ENCODE measurements at regions of chr6 and their contacts with region 1.

Region 1: DNA sequence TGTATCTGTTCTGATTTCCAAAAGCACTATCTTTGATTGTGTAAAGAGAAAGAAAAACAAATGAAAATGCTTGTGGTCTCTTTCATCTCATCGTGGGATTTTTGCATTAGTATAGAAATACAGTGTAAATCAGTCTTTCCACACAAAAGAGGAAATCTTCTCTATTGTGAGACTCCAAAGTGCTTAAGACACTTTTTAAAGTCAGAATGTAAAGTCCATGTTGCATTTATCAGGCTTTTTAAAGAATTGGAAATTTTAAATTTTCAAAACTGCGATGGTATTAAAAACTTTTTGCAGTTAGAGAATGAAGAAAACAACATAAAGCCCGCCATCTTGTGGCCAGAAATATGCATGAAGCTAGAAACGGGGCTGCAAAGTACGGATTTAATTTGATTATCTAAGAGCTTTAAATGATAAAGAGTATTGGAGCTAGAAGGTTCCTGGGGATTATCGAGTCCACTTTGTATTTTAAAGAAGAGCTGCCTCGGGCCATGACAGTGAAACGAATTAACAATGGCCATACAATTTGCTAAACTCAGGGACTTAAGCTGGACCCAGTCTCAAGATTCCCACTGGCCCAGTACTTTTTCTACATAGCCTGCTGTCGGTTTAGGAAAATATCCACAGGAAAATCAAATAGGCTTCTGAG is 339.6 kb downstream of the ARHGAP18 start:
- DNase-seq: peak; percentile 62
- ATAC-seq: peak; percentile 33
- H3K4me3 Mint-ChIP-seq: no peak overlapping the region
- H3K27ac Mint-ChIP-seq: peak overlapping the region; percentile 14
- H3K4me1 Mint-ChIP-seq: peaks cover 19% of the 10 kb centered on the region
- H3K27me3 Mint-ChIP-seq: no peaks in the 10 kb centered on the region

Region 2: GRCh38 chr6:127554435-127555006 is 1815.9 kb before region 1 on chr6:
- CTCF ChIA-PET with region 1: no interaction called
- POLR2A ChIA-PET with region 1: no interaction called
- intact Hi-C with region 1: loop called in 1 of 2 experiments (anchors 5 kb)
- DNase-seq: peak; percentile 36
- ATAC-seq: peak; percentile 42
- H3K4me3 Mint-ChIP-seq: no peak overlapping the region
- H3K27ac Mint-ChIP-seq: no peak overlapping the region
- H3K4me1 Mint-ChIP-seq: no peaks in the 10 kb centered on the region
- H3K27me3 Mint-ChIP-seq: peaks cover 26% of the 10 kb centered on the region

Region 3: DNA sequence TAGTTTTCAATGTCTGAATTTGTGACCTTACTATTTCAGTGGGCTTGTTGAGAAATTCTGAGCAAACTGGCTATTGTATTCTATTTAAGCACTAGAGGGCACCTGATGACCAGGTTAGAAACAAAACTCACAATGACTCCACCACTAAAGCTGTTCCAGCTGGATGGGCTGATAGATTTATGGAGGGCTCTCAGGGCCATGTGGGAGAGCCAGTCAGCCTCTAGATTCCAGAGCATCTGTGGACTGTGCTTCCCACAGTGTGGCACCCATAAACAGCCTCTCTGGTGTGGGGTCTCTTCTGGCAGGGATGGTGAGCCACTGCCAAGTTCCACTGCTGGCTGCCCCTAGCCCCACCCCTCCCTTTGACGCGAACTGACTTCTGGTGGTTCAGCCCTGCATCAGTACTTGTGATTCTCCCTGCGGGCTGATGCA is 1764.2 kb before region 1 on chr6:
- CTCF ChIA-PET with region 1: no interaction called
- POLR2A ChIA-PET with region 1: no interaction called
- intact Hi-C with region 1: loop called in 1 of 2 experiments (anchors 5 kb)
- DNase-seq: no peak
- ATAC-seq: peak; percentile 44
- H3K4me3 Mint-ChIP-seq: no peak overlapping the region
- H3K27ac Mint-ChIP-seq: no peak overlapping the region
- H3K4me1 Mint-ChIP-seq: no peaks in the 10 kb centered on the region
- H3K27me3 Mint-ChIP-seq: no peaks in the 10 kb centered on the region

Region 4: GRCh38 chr6:128725271-128726233 is 644.8 kb before region 1 on chr6:
- CTCF ChIA-PET with region 1: no interaction called
- POLR2A ChIA-PET with region 1: no interaction called
- intact Hi-C with region 1: loop called in 1 of 2 experiments (anchors 5 kb)
- DNase-seq: peak; percentile 40
- ATAC-seq: no peak
- H3K4me3 Mint-ChIP-seq: no peak overlapping the region
- H3K27ac Mint-ChIP-seq: no peak overlapping the region
- H3K4me1 Mint-ChIP-seq: no peaks in the 10 kb centered on the region
- H3K27me3 Mint-ChIP-seq: peaks cover 30% of the 10 kb centered on the region

Region 5: DNA sequence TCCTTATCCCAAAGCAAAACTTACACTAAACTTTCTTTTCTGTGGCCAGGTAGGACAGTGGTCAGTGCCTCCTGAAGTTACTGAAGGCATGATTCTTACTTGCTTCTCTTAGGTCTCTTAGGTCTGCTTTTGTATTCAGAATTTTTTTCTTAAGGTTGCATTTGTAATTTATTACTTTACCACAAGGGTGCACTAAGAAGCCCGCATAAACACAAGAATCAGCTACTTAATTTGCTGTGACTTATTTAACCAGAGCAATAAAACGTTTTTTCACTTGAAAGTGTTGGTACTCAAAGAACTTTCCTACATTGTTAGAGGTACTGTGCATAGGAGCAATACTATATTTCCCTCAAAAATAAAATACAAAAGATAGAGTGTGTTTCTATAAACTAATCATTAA is 562.8 kb before region 1 on chr6:
- CTCF ChIA-PET with region 1: interaction called, 4 read pairs
- POLR2A ChIA-PET with region 1: no interaction called
- intact Hi-C with region 1: loop called in 1 of 2 experiments (anchors 5 kb)
- DNase-seq: no peak
- ATAC-seq: no peak
- H3K4me3 Mint-ChIP-seq: no peak overlapping the region
- H3K27ac Mint-ChIP-seq: no peak overlapping the region
- H3K4me1 Mint-ChIP-seq: no peaks in the 10 kb centered on the region
- H3K27me3 Mint-ChIP-seq: peaks cover 8% of the 10 kb centered on the region

Region 6: DNA sequence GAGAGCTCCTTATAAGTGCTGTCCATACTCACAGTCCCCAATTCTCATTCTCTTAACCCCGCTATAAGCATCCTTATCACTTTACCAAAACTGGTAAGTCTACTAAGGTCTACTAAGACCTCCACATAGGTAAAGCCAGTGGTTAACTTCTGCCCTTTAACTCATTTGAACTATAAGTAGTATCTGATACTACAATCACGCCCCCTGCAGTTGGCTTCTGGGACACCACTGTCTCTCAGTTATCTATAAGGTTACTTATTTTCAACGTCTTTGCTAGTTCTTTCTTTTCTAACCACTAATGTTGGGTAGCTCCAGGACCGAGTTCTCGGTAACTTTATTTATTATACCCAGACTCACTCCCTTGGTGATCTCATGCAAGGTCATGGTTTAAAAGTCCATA is 197.0 kb after region 1 on chr6:
- CTCF ChIA-PET with region 1: interaction called, 3 read pairs
- POLR2A ChIA-PET with region 1: no interaction called
- intact Hi-C with region 1: loop called in 1 of 2 experiments (anchors 5 kb)
- DNase-seq: peak; percentile 76
- ATAC-seq: peak; percentile 68
- H3K4me3 Mint-ChIP-seq: no peak overlapping the region
- H3K27ac Mint-ChIP-seq: no peak overlapping the region
- H3K4me1 Mint-ChIP-seq: peaks cover 3% of the 10 kb centered on the region
- H3K27me3 Mint-ChIP-seq: no peaks in the 10 kb centered on the region

Region 7: GRCh38 chr6:129849456-129849855 is 479.1 kb after region 1 on chr6:
- CTCF ChIA-PET with region 1: no interaction called
- POLR2A ChIA-PET with region 1: no interaction called
- intact Hi-C with region 1: no loop called
- DNase-seq: no peak
- ATAC-seq: no peak
- H3K4me3 Mint-ChIP-seq: no peak overlapping the region
- H3K27ac Mint-ChIP-seq: no peak overlapping the region
- H3K4me1 Mint-ChIP-seq: no peaks in the 10 kb centered on the region
- H3K27me3 Mint-ChIP-seq: no peaks in the 10 kb centered on the region